ENCODE measurements at regions of chr9 and their contacts with region 1.

Region 1: GRCh38 chr9:130682490-130683121 is 11.0 kb upstream of the EXOSC2 start:
- DNase-seq: peak; percentile 59
- H3K4me3 ChIP-seq: peak overlapping the region; percentile 72
- H3K27ac ChIP-seq: no peak overlapping the region
- H3K4me1 ChIP-seq: peaks cover 9% of the 10 kb centered on the region
- CTCF ChIP-seq: peak; percentile 90

Region 2: GRCh38 chr9:130461218-130461630 is 221.4 kb before region 1 on chr9:
- CTCF ChIA-PET with region 1: no interaction called
- POLR2A ChIA-PET with region 1: interaction called, 6 read pairs
- intact Hi-C with region 1: loop called (anchors 1 kb)
- DNase-seq: peak; percentile 66
- H3K4me3 ChIP-seq: no peak overlapping the region
- H3K27ac ChIP-seq: no peak overlapping the region
- H3K4me1 ChIP-seq: no peaks in the 10 kb centered on the region
- CTCF ChIP-seq: peak; percentile 79

Region 3: GRCh38 chr9:130672466-130672865 is 10.1 kb before region 1 on chr9:
- CTCF ChIA-PET with region 1: no interaction called
- POLR2A ChIA-PET with region 1: no interaction called
- intact Hi-C with region 1: no loop called
- DNase-seq: no peak
- H3K4me3 ChIP-seq: no peak overlapping the region
- H3K27ac ChIP-seq: no peak overlapping the region
- H3K4me1 ChIP-seq: no peaks in the 10 kb centered on the region
- CTCF ChIP-seq: no peak

Region 4: DNA sequence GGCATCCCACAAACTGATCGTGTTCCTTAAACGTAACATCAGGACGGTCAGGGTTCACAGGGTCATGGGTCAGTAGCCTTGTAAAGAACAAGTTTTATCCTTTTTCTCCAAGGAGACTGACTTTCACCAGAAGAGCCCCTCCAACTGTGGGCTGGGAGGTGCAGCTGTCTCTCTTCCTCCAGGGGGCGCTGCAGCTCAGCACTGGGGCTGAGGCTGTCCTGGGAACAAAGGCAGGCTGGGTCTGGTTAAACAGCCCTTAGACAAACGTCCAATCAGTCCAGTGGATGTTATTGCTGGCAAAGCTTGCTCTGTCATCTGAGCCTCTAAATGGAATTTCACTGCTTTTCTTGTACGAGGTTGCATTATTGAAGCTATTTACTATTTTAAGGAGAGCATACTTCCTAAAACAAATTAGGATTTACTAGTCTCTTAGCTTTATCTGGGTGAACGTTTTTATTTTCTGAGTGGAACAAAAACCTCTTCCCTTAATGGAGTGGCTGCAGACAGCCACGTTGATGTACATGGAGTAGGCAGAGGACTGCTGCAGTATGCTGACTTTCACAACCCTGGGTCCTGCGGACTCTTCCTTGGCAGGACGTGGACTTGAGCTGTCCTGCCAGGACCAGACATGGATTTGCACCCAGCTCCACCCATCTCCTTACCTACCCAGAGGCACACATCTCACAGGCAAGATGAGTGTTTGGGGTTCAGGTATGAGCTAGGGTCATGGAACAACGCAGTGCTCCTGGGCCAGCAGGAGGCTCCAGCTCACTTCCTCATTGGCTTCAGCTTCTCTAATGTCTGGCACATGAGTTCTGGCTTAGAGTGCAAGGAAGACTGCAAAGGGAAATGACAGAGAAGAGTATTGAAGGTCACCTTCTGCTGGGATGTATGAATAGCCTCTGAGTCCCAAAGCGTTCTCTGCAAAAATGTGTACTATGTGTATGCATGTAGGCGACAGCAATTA is 18.7 kb after region 1 on chr9:
- CTCF ChIA-PET with region 1: no interaction called
- POLR2A ChIA-PET with region 1: no interaction called
- intact Hi-C with region 1: no loop called
- DNase-seq: peak; percentile 70
- H3K4me3 ChIP-seq: no peak overlapping the region
- H3K27ac ChIP-seq: no peak overlapping the region
- H3K4me1 ChIP-seq: peaks cover 1% of the 10 kb centered on the region
- CTCF ChIP-seq: peak; percentile 97